ENCODE measurements at regions of chr19 and their contacts with region 1.

Region 1: GRCh38 chr19:11035441-11036377 is 53.6 kb upstream of the LDLR start:
- DNase-seq: peak; percentile 99
- H3K4me3 Mint-ChIP-seq: no peak overlapping the region
- H3K27ac Mint-ChIP-seq: peak overlapping the region; percentile 67
- H3K4me1 Mint-ChIP-seq: peaks cover 22% of the 10 kb centered on the region
- H3K27me3 Mint-ChIP-seq: no peaks in the 10 kb centered on the region
- CTCF ChIP-seq: peak; percentile 95

Region 2: DNA sequence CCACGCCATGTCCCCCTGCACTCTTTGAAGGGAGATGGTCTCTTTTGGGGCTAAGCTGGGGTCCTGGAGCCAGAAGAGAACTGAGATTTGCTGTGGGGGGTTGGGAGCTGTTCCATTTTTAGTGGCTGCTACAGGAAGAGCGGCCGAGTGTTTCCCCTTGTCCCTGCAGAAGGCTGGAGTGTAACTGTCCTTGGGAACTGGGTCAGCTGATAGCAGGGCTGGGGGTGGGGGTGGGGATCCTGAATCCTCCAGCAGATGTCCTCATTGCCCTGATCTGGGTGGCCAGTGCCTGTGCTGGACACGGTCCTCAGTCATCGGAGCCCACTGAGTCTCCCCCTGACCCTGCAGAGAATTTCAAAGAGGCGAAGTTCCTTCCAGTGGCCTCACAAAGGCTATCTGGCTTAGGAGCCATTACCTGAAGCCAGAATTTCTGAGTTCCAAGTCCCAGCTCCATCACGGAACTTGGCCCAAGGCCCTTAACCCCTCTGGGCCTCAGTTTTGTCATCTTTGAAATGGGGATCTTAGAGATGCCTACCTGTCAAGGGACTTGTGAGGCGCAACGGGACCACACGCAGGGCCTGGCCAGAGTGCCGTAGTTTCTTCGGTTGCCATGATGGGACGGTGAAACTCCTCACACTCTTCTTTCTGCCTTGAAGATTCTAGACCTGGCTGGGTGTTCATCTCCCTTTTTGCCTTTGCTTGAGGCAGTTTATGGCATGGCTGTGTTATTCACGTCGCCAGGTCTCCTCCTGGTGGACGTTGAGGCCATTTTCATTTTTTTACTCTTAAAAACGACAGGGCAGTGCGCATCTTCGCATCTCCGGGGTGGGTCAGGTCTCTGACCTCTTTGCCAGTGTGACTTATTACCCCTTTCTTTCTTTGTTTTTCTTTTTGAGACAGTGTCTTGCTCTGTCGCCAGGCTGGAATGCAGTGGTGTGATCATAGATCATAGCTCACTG is 265.9 kb before region 1 on chr19:
- CTCF ChIA-PET with region 1: no interaction called
- POLR2A ChIA-PET with region 1: no interaction called
- intact Hi-C with region 1: no loop called
- DNase-seq: peak; percentile 29
- H3K4me3 Mint-ChIP-seq: no peak overlapping the region
- H3K27ac Mint-ChIP-seq: peak overlapping the region; percentile 78
- H3K4me1 Mint-ChIP-seq: peaks cover 6% of the 10 kb centered on the region
- H3K27me3 Mint-ChIP-seq: no peaks in the 10 kb centered on the region
- CTCF ChIP-seq: no peak

Region 3: GRCh38 chr19:10936661-10937084 is 99.0 kb before region 1 on chr19:
- CTCF ChIA-PET with region 1: interaction called, 13 read pairs
- POLR2A ChIA-PET with region 1: no interaction called
- intact Hi-C with region 1: no loop called
- DNase-seq: peak; percentile 84
- H3K4me3 Mint-ChIP-seq: no peak overlapping the region
- H3K27ac Mint-ChIP-seq: no peak overlapping the region
- H3K4me1 Mint-ChIP-seq: no peaks in the 10 kb centered on the region
- H3K27me3 Mint-ChIP-seq: no peaks in the 10 kb centered on the region
- CTCF ChIP-seq: peak; percentile 55

Region 4: DNA sequence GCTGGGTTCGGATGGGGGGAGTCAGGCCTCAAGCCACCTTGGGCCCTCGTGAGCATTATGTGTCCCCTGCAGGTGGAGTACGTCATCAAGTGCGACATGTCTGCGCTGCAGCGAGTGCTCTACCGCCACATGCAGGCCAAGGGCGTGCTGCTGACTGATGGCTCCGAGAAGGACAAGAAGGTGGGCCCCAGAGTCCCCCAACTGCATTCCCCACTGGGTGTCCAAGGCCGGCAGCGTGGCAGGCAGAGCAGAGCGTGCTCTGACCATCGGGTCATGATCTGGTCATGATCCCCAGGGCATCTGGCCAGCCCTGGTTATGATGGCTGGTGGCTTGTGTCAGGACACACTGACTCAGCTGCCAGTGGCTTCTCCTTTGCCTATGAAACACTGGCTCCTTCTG is 11.4 kb before region 1 on chr19:
- CTCF ChIA-PET with region 1: interaction called, 11 read pairs
- POLR2A ChIA-PET with region 1: interaction called, 3 read pairs
- intact Hi-C with region 1: no loop called
- DNase-seq: no peak
- H3K4me3 Mint-ChIP-seq: no peak overlapping the region
- H3K27ac Mint-ChIP-seq: no peak overlapping the region
- H3K4me1 Mint-ChIP-seq: no peaks in the 10 kb centered on the region
- H3K27me3 Mint-ChIP-seq: no peaks in the 10 kb centered on the region
- CTCF ChIP-seq: no peak

Region 5: GRCh38 chr19:11078893-11079292 is 43.2 kb after region 1 on chr19:
- CTCF ChIA-PET with region 1: interaction called, 12 read pairs
- POLR2A ChIA-PET with region 1: interaction called, 5 read pairs
- intact Hi-C with region 1: no loop called
- DNase-seq: no peak
- H3K4me3 Mint-ChIP-seq: no peak overlapping the region
- H3K27ac Mint-ChIP-seq: no peak overlapping the region
- H3K4me1 Mint-ChIP-seq: peaks cover 10% of the 10 kb centered on the region
- H3K27me3 Mint-ChIP-seq: no peaks in the 10 kb centered on the region
- CTCF ChIP-seq: no peak

Region 6: DNA sequence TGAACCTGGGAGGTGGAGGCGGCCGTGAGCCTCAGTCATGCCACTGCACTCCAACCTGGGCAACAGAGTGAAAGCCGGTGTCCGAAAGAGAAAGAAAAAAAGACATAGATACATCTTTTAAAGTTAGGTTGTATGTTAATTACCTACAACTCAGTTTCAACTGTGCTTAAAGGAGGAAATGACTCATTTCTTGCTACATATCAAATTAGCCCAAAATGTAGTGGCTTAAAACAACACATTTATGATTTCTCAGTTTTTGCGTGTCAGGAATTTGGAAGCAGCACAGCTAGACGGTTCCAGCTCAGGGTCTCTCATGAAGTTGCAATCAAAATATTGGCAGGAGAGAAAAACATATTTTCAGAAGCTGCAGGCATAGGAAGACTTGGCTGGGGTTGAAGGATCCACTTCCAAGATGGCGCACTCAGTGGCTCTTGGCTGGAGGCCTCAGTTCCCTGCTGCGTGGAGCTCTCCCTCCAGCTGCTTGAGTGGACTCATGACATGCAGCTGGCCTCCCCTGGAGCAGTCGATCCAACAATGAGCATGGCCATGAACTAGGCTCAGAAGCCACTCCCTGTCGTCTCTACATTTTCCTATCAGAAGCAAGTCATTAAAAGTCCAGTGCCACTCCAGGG is 60.6 kb after region 1 on chr19:
- CTCF ChIA-PET with region 1: interaction called, 11 read pairs
- POLR2A ChIA-PET with region 1: interaction called, 59 read pairs
- intact Hi-C with region 1: no loop called
- DNase-seq: peak; percentile 88
- H3K4me3 Mint-ChIP-seq: peak overlapping the region; percentile 92
- H3K27ac Mint-ChIP-seq: peak overlapping the region; percentile 95
- H3K4me1 Mint-ChIP-seq: peaks cover 26% of the 10 kb centered on the region
- H3K27me3 Mint-ChIP-seq: no peaks in the 10 kb centered on the region
- CTCF ChIP-seq: no peak

Region 7: GRCh38 chr19:11203194-11204075 is 167.7 kb after region 1 on chr19:
- CTCF ChIA-PET with region 1: interaction called, 3 read pairs
- POLR2A ChIA-PET with region 1: no interaction called
- intact Hi-C with region 1: loop called (anchors 2 kb)
- DNase-seq: peak; percentile 78
- H3K4me3 Mint-ChIP-seq: peak overlapping the region; percentile 17
- H3K27ac Mint-ChIP-seq: peak overlapping the region; percentile 47
- H3K4me1 Mint-ChIP-seq: peaks cover 25% of the 10 kb centered on the region
- H3K27me3 Mint-ChIP-seq: no peaks in the 10 kb centered on the region
- CTCF ChIP-seq: peak; percentile 91

Measured in MCF 10A (cell line).